ENCODE measurements at regions of chr7 and their contacts with region 1.

Region 1: GRCh38 chr7:95396136-95397032 is at the start of gene PON3:
- DNase-seq: peak in 3 of 9 experiments; percentile 7 to 47 (median 45)
- ATAC-seq: peak; percentile 94
- H3K4me3 ChIP-seq: peak within 1 kb of the TSS; percentile 30 to 47
- H3K4me3 Mint-ChIP-seq: peak within 1 kb of the TSS; percentile 78
- H3K27ac ChIP-seq: no peak within 1 kb of the TSS
- H3K27ac Mint-ChIP-seq: no peak within 1 kb of the TSS
- H3K4me1 ChIP-seq: peaks cover 4% of the 10 kb centered on the region
- H3K4me1 Mint-ChIP-seq: peaks cover 6% of the 10 kb centered on the region
- H3K27me3 ChIP-seq: peaks cover 4 to 14% of the 10 kb centered on the region in 2 experiments
- H3K27me3 Mint-ChIP-seq: peaks cover 33% of the 10 kb centered on the region
- CTCF ChIP-seq: no peak
- total RNA-seq, gene PON3: not detected

Region 2: DNA sequence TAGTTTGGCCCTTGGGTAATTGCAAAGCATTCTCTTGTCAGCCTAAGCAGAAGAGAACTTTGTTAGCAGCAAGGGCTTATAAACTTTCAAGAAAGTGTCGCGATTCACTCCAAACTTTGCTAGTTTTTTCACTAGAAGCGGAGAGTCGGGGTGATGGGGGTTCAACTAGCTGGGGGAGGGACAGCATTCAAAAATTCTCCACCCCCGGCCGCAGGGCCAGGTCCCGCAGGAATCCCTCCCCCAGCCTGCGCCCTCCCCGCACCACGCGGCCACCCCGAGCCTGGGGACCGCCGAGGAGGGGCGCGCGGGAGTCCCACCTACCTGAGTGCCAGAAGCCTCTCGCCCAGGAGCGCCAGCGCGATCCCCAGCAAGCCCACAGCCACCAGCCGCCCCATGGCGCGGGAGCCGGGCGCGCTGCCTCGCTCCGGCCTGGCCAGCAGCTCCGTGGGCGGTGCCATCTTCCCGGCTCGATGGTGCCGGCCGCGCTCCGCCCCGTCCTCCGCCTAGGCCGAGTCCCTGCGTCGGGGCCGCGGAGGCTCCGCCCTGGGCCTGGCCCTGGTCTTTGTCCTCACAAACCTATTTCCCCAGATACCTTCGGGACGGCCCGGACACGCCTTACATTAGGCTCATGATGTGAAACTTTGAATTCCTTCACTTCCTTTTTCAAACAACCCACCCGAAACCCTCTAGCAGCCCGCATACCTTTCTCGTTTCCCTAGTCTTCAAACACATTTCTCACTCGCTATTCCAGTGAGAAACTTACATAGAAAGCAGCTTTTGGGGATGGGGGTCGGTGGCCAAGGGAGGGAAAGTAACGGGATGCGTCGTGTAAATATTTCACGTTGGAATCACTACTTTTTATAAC is 38.4 kb after region 1 on chr7 and contains the start of gene PON2:
- CTCF ChIA-PET with region 1: no interaction called
- POLR2A ChIA-PET with region 1: no interaction called
- intact Hi-C with region 1: no loop called
- DNase-seq: peak; percentile 9 to 74 (median 37)
- ATAC-seq: peak; percentile 78
- H3K4me3 ChIP-seq: peak within 1 kb of the TSS; percentile 59 to 75
- H3K4me3 Mint-ChIP-seq: peak within 1 kb of the TSS; percentile 90
- H3K27ac ChIP-seq: peak within 1 kb of the TSS; percentile 41 to 53
- H3K27ac Mint-ChIP-seq: peak within 1 kb of the TSS; percentile 90
- H3K4me1 ChIP-seq: peaks cover 8% of the 10 kb centered on the region
- H3K4me1 Mint-ChIP-seq: peaks cover 21% of the 10 kb centered on the region
- H3K27me3 ChIP-seq: no peaks in the 10 kb centered on the region
- H3K27me3 Mint-ChIP-seq: no peaks in the 10 kb centered on the region
- CTCF ChIP-seq: no peak
- total RNA-seq, gene PON2: 8.0 to 9.3 TPM

Region 3: GRCh38 chr7:95476904-95477594 is 80.7 kb after region 1 on chr7:
- CTCF ChIA-PET with region 1: interaction called, 12 read pairs
- POLR2A ChIA-PET with region 1: no interaction called
- intact Hi-C with region 1: loop called in 1 of 2 experiments (anchors 1 kb)
- DNase-seq: peak; percentile 8 to 77 (median 49)
- ATAC-seq: peak; percentile 71
- H3K4me3 ChIP-seq: no peak overlapping the region
- H3K4me3 Mint-ChIP-seq: peak overlapping the region; percentile 11
- H3K27ac ChIP-seq: no peak overlapping the region
- H3K27ac Mint-ChIP-seq: no peak overlapping the region
- H3K4me1 ChIP-seq: no peaks in the 10 kb centered on the region
- H3K4me1 Mint-ChIP-seq: peaks cover 2% of the 10 kb centered on the region
- H3K27me3 ChIP-seq: no peaks in the 10 kb centered on the region
- H3K27me3 Mint-ChIP-seq: no peaks in the 10 kb centered on the region
- CTCF ChIP-seq: peak; percentile 96

Region 4: DNA sequence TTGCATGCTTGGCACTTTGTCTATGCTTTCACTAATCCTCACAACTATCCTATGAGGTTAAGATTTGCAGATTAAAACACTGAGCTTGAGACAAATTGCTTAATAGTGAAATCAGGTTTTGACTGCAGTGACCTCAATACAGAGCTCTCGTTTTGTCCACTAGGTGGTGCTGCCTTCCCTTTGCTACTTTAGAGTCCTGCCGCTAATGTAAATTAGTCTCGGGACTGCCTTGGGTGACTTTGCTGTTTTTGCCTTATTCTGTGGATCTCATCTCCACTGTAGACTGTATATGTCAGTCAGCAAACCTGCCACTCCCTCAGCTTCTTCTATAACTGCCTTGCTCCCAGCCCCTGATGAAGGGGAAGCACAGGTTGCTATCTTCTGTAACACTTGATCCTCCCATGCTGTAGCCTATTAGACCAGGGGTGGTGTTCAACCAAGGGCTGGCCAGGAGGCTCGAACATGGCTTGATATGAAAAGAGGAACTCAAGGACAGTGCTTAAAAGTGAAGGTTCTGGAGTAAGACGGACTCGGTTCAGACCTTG is 115.4 kb after region 1 on chr7:
- CTCF ChIA-PET with region 1: no interaction called
- POLR2A ChIA-PET with region 1: no interaction called
- intact Hi-C with region 1: no loop called
- DNase-seq: peak in 8 of 9 experiments; percentile 13 to 62 (median 32)
- ATAC-seq: peak; percentile 58
- H3K4me3 ChIP-seq: no peak overlapping the region
- H3K4me3 Mint-ChIP-seq: no peak overlapping the region
- H3K27ac ChIP-seq: no peak overlapping the region
- H3K27ac Mint-ChIP-seq: no peak overlapping the region
- H3K4me1 ChIP-seq: no peaks in the 10 kb centered on the region
- H3K4me1 Mint-ChIP-seq: peaks cover 2% of the 10 kb centered on the region
- H3K27me3 ChIP-seq: no peaks in the 10 kb centered on the region
- H3K27me3 Mint-ChIP-seq: peaks cover 3% of the 10 kb centered on the region
- CTCF ChIP-seq: peak; percentile 64

Measured in CD8-positive, alpha-beta T cell (primary cell).